Naive thymus-derived CD4-positive, alpha-beta T cell (primary cell): ENCODE measurements at regions of chr19 and their contacts with region 1.

Region 1: GRCh38 chr19:16111160-16111908 is at the start of gene RAB8A:
- DNase-seq: peak; percentile 98 to 100 (median 99)
- ATAC-seq: peak; percentile 93
- H3K4me3 ChIP-seq: peak within 1 kb of the TSS; percentile 90
- H3K4me3 Mint-ChIP-seq: peak within 1 kb of the TSS; percentile 93 to 99 (median 98)
- H3K27ac ChIP-seq: peak within 1 kb of the TSS; percentile 94
- H3K27ac Mint-ChIP-seq: peak within 1 kb of the TSS; percentile 89 to 99 (median 97)
- H3K4me1 ChIP-seq: peaks cover 10 to 19% of the 10 kb centered on the region in 2 donors
- H3K4me1 Mint-ChIP-seq: peaks cover 23 to 49% (median 40%) of the 10 kb centered on the region in 7 donors
- H3K27me3 ChIP-seq: no peaks in the 10 kb centered on the region
- H3K27me3 Mint-ChIP-seq: no peaks in the 10 kb centered on the region
- total RNA-seq, gene RAB8A: 64.4 to 154 (median 74.5) TPM

Region 2: GRCh38 chr19:15125232-15126067 is 985.9 kb before region 1 on chr19:
- CTCF ChIA-PET with region 1: no interaction called
- POLR2A ChIA-PET with region 1: no interaction called
- intact Hi-C with region 1: loop called in 1 of 2 experiments (anchors 1 kb)
- DNase-seq: peak; percentile 94 to 98 (median 96)
- ATAC-seq: peak; percentile 93
- H3K4me3 ChIP-seq: peak overlapping the region; percentile 90
- H3K4me3 Mint-ChIP-seq: peak overlapping the region; percentile 89 to 100 (median 98)
- H3K27ac ChIP-seq: peak overlapping the region; percentile 92
- H3K27ac Mint-ChIP-seq: peak overlapping the region; percentile 91 to 100 (median 97)
- H3K4me1 ChIP-seq: peaks cover 0 to 25% of the 10 kb centered on the region in 2 donors
- H3K4me1 Mint-ChIP-seq: peaks cover 27 to 59% (median 44%) of the 10 kb centered on the region in 7 donors
- H3K27me3 ChIP-seq: no peaks in the 10 kb centered on the region
- H3K27me3 Mint-ChIP-seq: peaks cover 0 to 2% (median 0%) of the 10 kb centered on the region in 5 donors

Region 3: GRCh38 chr19:15836595-15837337 is 274.6 kb before region 1 on chr19:
- CTCF ChIA-PET with region 1: no interaction called
- POLR2A ChIA-PET with region 1: interaction called, 3 read pairs
- intact Hi-C with region 1: loop called (anchors 1 kb)
- DNase-seq: peak; percentile 81 to 98 (median 97)
- ATAC-seq: peak; percentile 94
- H3K4me3 ChIP-seq: peak overlapping the region; percentile 60
- H3K4me3 Mint-ChIP-seq: peak overlapping the region; percentile 88 to 99 (median 95)
- H3K27ac ChIP-seq: peak overlapping the region; percentile 90
- H3K27ac Mint-ChIP-seq: peak overlapping the region in 7 of 9 donors; percentile 95 to 100 (median 98)
- H3K4me1 ChIP-seq: peaks cover 5 to 7% of the 10 kb centered on the region in 2 donors
- H3K4me1 Mint-ChIP-seq: peaks cover 18 to 28% (median 24%) of the 10 kb centered on the region in 7 donors
- H3K27me3 ChIP-seq: no peaks in the 10 kb centered on the region
- H3K27me3 Mint-ChIP-seq: no peaks in the 10 kb centered on the region

Region 4: DNA sequence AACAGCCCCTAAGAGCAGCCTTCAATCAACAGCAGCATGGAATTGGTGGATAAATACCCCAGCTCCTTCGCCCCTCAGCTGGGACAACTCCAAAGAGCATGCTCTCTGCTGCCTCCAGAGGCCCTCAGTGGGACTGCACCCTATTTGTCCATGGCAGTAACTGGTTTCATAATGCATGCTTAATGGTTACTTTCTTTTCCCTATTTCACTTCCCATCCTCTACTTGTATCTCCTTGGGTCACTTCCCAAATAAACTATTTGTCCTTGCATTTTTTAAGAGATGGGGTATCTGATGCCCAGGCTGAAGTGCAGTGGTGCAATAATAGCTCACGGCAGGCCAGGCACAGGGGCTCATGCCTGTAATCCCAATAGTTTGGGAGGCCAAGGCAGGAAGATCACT is 48.5 kb before region 1 on chr19:
- CTCF ChIA-PET with region 1: interaction called, 12 read pairs
- POLR2A ChIA-PET with region 1: interaction called, 4 read pairs
- intact Hi-C with region 1: loop called (anchors 1 kb)
- DNase-seq: peak; percentile 32 to 77 (median 63)
- ATAC-seq: peak; percentile 89
- H3K4me3 ChIP-seq: no peak overlapping the region
- H3K4me3 Mint-ChIP-seq: peak overlapping the region in 1 of 10 donors; percentile 37
- H3K27ac ChIP-seq: no peak overlapping the region
- H3K27ac Mint-ChIP-seq: peak overlapping the region in 2 of 9 donors; percentile 3 to 24
- H3K4me1 ChIP-seq: peaks cover 0 to 4% of the 10 kb centered on the region in 2 donors
- H3K4me1 Mint-ChIP-seq: peaks cover 15 to 27% (median 21%) of the 10 kb centered on the region in 7 donors
- H3K27me3 ChIP-seq: no peaks in the 10 kb centered on the region
- H3K27me3 Mint-ChIP-seq: peaks cover 0 to 10% (median 0%) of the 10 kb centered on the region in 5 donors

Region 5: DNA sequence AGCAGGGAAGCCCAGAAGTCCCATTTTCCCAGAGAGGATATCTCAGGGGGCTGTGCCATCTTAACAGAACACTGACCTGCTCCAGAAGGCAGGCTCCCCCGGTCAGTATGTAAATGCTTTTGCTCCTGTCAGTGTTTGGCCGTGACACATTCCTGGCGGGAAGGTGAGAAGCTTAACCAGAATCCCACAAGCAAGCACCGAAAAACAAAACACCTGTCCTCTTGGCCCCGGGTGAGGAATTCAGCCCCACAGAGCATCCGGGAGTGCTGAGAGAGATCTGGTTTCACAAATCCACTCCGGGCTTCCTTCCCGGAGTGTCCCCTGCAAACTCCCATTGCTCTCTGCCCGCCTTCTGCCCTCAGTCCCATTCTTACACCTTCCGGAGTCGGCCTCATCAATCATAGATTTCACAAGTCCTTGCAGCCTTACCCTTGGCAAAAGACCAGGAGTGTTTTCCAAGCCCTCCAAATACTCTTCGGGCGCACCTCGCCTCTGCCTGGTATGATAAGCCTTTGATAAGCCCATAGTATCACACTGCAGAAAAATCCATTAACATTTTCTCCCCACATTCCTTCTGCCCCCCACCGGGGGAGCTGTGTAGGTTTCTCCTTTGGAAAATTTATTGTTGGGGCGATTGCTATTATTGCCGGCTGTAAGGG is 22.9 kb before region 1 on chr19:
- CTCF ChIA-PET with region 1: interaction called, 7 read pairs
- POLR2A ChIA-PET with region 1: interaction called, 7 read pairs
- intact Hi-C with region 1: loop called in 1 of 2 experiments (anchors 1 kb)
- DNase-seq: no peak
- ATAC-seq: no peak
- H3K4me3 ChIP-seq: no peak overlapping the region
- H3K4me3 Mint-ChIP-seq: peak overlapping the region in 3 of 10 donors; percentile 23 to 35 (median 32)
- H3K27ac ChIP-seq: no peak overlapping the region
- H3K27ac Mint-ChIP-seq: peak overlapping the region in 8 of 9 donors; percentile 20 to 96 (median 68)
- H3K4me1 ChIP-seq: peaks cover 25 to 26% of the 10 kb centered on the region in 2 donors
- H3K4me1 Mint-ChIP-seq: peaks cover 25 to 63% (median 51%) of the 10 kb centered on the region in 7 donors
- H3K27me3 ChIP-seq: no peaks in the 10 kb centered on the region
- H3K27me3 Mint-ChIP-seq: no peaks in the 10 kb centered on the region

Region 6: GRCh38 chr19:16191216-16191908 is 80.0 kb after region 1 on chr19:
- CTCF ChIA-PET with region 1: no interaction called
- POLR2A ChIA-PET with region 1: no interaction called
- intact Hi-C with region 1: no loop called
- DNase-seq: no peak
- ATAC-seq: no peak
- H3K4me3 ChIP-seq: no peak overlapping the region
- H3K4me3 Mint-ChIP-seq: peak overlapping the region in 1 of 10 donors; percentile 20
- H3K27ac ChIP-seq: no peak overlapping the region
- H3K27ac Mint-ChIP-seq: peak overlapping the region in 1 of 9 donors; percentile 34
- H3K4me1 ChIP-seq: peaks cover 5 to 7% of the 10 kb centered on the region in 2 donors
- H3K4me1 Mint-ChIP-seq: peaks cover 9 to 28% (median 20%) of the 10 kb centered on the region in 7 donors
- H3K27me3 ChIP-seq: no peaks in the 10 kb centered on the region
- H3K27me3 Mint-ChIP-seq: no peaks in the 10 kb centered on the region

Region 7: DNA sequence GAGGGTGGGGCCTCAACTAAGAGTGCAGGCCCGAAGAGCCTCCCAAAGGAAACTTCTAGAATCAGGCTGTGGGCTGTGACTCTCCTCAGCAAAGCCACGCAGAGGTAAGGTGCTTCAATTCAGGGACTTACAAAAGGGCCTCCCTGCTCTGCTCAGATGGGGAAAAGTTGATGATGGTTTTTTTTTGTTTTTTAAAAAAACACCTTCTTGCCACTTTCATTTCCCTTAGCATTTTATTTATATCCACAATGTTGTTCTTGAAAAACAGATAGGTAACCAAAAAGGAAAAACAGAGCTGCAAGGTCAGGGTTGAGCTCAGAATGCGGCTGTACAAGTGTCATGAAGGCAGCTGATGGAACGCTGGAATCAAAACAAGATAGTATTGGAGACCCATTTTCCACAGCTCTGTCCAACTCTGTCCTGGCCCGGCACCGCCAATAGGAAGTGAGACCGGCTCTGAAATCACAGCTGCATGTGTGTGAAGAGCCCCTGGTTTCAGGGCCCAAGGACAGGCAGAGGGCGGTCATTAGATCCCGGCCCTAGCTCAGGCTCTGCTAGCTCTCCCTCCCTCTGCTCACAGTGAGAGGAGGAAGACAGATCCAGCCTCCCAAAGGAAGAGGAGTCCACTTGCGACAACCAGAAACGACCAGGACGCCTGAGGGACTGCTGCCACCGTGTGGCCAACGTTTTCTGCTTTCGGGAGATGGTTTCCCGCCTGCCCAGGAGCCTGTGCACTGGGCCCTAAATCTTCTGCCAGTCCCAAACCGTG is 271.6 kb after region 1 on chr19:
- CTCF ChIA-PET with region 1: no interaction called
- POLR2A ChIA-PET with region 1: no interaction called
- intact Hi-C with region 1: loop called in 1 of 2 experiments (anchors 1 kb)
- DNase-seq: peak; percentile 63 to 81 (median 75)
- ATAC-seq: peak; percentile 82
- H3K4me3 ChIP-seq: peak overlapping the region; percentile 44
- H3K4me3 Mint-ChIP-seq: peak overlapping the region; percentile 61 to 84 (median 70)
- H3K27ac ChIP-seq: peak overlapping the region; percentile 84
- H3K27ac Mint-ChIP-seq: peak overlapping the region in 7 of 9 donors; percentile 87 to 98 (median 97)
- H3K4me1 ChIP-seq: peaks cover 37 to 53% of the 10 kb centered on the region in 2 donors
- H3K4me1 Mint-ChIP-seq: peaks cover 36 to 81% (median 63%) of the 10 kb centered on the region in 7 donors
- H3K27me3 ChIP-seq: no peaks in the 10 kb centered on the region
- H3K27me3 Mint-ChIP-seq: no peaks in the 10 kb centered on the region

Region 8: DNA sequence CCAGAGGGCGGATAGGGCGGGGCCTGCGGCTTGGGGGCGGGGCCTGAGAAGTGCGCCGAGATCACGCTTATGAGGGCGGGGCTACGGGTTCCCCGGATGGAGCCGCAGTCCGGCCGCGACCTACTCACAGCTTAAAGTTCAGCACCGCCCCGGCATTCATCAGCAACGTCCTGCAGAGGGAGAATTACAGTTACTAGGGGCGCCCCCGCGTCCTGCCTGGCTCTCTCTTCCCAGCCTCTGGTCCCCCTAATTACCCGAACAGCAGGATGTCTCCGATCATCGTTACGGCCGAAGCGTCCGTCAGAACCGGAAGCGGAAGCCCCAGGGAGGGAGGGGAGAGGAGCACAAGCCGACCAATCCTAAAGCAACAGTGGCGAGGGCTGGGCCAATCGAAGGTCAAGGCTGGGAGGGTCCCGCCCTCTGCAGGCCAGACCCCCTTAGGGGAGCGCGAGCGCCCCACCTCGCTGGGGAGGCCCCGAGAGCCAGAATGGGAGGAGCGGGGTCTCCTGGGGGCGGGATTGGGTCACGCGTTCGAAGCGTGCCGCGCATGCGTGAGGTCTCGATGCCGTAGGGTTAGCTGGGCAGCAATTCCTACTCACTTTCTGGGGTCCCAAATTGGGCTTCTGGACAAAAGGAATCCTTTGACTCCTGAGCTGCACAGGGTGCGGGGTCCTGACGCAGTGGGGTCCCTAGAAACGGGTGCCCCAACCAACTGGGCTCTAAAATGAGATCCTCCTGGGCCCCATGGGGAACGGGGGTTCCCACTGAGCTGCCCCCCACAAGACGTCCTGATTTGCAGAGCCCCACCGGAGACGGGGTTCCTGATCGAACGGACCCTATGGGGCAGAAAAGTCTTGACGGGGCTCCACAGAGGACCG is 548.7 kb after region 1 on chr19 and contains the start of gene SMIM7:
- CTCF ChIA-PET with region 1: no interaction called
- POLR2A ChIA-PET with region 1: no interaction called
- intact Hi-C with region 1: loop called in 1 of 2 experiments (anchors 1 kb)
- DNase-seq: peak; percentile 95 to 100 (median 99)
- ATAC-seq: peak; percentile 98
- H3K4me3 ChIP-seq: peak within 1 kb of the TSS; percentile 74
- H3K4me3 Mint-ChIP-seq: peak within 1 kb of the TSS; percentile 88 to 100 (median 98)
- H3K27ac ChIP-seq: peak within 1 kb of the TSS; percentile 91
- H3K27ac Mint-ChIP-seq: peak within 1 kb of the TSS; percentile 96 to 99 (median 98)
- H3K4me1 ChIP-seq: peaks cover 19 to 30% of the 10 kb centered on the region in 2 donors
- H3K4me1 Mint-ChIP-seq: peaks cover 22 to 55% (median 41%) of the 10 kb centered on the region in 7 donors
- H3K27me3 ChIP-seq: no peaks in the 10 kb centered on the region
- H3K27me3 Mint-ChIP-seq: peaks cover 0 to 24% (median 0%) of the 10 kb centered on the region in 5 donors
- total RNA-seq, gene SMIM7: 56.9 to 108 (median 78.5) TPM